ENCODE measurements at regions of chr12 and their contacts with region 1.

Region 1: DNA sequence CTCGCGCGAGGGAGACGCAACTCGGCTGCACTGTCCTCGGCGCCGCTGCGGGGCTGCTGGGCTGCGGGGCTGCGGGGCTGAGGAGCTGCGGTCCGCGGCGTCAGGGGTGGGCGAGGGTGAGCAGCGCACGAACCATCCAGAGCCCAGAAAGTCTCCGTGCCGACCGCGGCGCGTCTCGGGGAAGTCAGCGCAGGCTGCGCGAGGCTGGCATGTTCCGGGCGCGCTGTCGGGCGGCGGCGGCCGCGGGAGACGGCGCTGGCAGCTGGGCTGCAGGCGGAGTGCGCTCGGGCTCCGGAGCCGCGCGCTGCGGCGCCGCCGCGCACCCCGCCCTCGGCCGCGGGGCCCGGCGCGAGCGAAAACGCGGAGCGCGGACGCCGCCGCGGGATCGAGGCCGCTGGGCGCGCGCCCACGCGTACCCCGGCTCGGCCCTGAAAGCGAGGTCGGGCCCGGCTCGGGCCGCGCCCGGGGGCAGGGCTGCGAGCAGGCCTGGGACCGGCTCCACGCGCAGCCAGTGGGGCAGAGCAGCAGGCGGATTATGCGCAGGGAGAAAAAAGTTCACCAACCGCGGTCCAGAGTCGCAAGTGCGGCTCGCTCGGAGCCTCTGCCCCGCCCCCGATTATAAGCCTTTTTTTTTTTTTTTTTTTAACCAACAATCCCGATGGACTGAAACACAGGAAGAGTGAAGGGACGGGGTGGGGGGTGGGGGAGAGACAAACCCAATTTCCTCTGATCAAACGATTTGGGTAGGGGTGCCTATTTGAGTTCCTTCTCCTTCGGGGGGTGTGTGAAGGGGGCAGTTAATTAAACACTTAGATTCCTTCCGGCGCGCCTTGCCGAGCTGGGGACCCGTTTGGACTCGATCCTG is at the start of gene PRICKLE1:
- DNase-seq: peak; percentile 48
- H3K4me3 Mint-ChIP-seq: peak within 1 kb of the TSS; percentile 81
- H3K27ac Mint-ChIP-seq: peak within 1 kb of the TSS; percentile 36
- H3K4me1 Mint-ChIP-seq: peaks cover 15% of the 10 kb centered on the region
- H3K27me3 Mint-ChIP-seq: no peaks in the 10 kb centered on the region
- CTCF ChIP-seq: no peak
- total RNA-seq, gene PRICKLE1: 7.0 and 12.7 TPM in 2 replicates

Region 2: DNA sequence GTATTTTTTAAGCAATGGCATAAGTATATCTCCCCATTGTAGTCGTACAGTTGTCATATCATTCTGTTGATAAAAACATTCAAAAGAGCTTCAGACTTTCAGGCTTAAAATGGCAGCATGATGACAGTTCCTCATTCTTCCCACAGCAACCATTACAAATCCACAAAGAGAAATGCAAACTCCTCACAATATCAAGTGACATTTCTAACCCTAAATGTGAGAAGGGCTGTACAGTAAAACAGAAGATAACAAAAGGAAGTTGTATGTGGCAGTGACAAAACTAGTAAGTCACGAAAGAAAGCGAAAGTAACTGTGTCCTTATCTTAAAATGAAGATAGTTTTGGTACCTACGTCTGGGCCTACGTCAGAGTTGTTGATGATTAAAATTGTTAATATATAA is 491.7 kb before region 1 on chr12:
- CTCF ChIA-PET with region 1: no interaction called
- intact Hi-C with region 1: no loop called
- DNase-seq: no peak
- H3K4me3 Mint-ChIP-seq: no peak overlapping the region
- H3K27ac Mint-ChIP-seq: no peak overlapping the region
- H3K4me1 Mint-ChIP-seq: no peaks in the 10 kb centered on the region
- H3K27me3 Mint-ChIP-seq: no peaks in the 10 kb centered on the region
- CTCF ChIP-seq: no peak

Region 3: GRCh38 chr12:42918443-42918842 is 328.7 kb after region 1 on chr12:
- CTCF ChIA-PET with region 1: interaction called, 3 read pairs
- intact Hi-C with region 1: loop called (anchors 5 kb)
- DNase-seq: no peak
- H3K4me3 Mint-ChIP-seq: no peak overlapping the region
- H3K27ac Mint-ChIP-seq: no peak overlapping the region
- H3K4me1 Mint-ChIP-seq: peaks cover 46% of the 10 kb centered on the region
- H3K27me3 Mint-ChIP-seq: no peaks in the 10 kb centered on the region
- CTCF ChIP-seq: no peak

Region 4: GRCh38 chr12:43158126-43158525 is 568.4 kb after region 1 on chr12:
- CTCF ChIA-PET with region 1: no interaction called
- intact Hi-C with region 1: no loop called
- DNase-seq: no peak
- H3K4me3 Mint-ChIP-seq: no peak overlapping the region
- H3K27ac Mint-ChIP-seq: no peak overlapping the region
- H3K4me1 Mint-ChIP-seq: no peaks in the 10 kb centered on the region
- H3K27me3 Mint-ChIP-seq: no peaks in the 10 kb centered on the region
- CTCF ChIP-seq: no peak

Measured in Calu3 (cell line).